Naive thymus-derived CD4-positive, alpha-beta T cell (primary cell): ENCODE measurements at regions of chr3 and their contacts with region 1.

Region 1: GRCh38 chr3:179015551-179016020 is 56.0 kb downstream of the ZMAT3 start:
- DNase-seq: peak in 8 of 9 donors; percentile 41 to 87 (median 82)
- ATAC-seq: peak; percentile 99
- H3K4me3 ChIP-seq: no peak overlapping the region
- H3K4me3 Mint-ChIP-seq: peak overlapping the region in 1 of 10 donors; percentile 35
- H3K27ac ChIP-seq: no peak overlapping the region
- H3K27ac Mint-ChIP-seq: peak overlapping the region in 5 of 9 donors; percentile 2 to 53 (median 32)
- H3K4me1 ChIP-seq: peaks cover 0 to 20% of the 10 kb centered on the region in 2 donors
- H3K4me1 Mint-ChIP-seq: peaks cover 15 to 42% (median 41%) of the 10 kb centered on the region in 7 donors
- H3K27me3 ChIP-seq: no peaks in the 10 kb centered on the region
- H3K27me3 Mint-ChIP-seq: peaks cover 0 to 19% (median 0%) of the 10 kb centered on the region in 5 donors

Region 2: DNA sequence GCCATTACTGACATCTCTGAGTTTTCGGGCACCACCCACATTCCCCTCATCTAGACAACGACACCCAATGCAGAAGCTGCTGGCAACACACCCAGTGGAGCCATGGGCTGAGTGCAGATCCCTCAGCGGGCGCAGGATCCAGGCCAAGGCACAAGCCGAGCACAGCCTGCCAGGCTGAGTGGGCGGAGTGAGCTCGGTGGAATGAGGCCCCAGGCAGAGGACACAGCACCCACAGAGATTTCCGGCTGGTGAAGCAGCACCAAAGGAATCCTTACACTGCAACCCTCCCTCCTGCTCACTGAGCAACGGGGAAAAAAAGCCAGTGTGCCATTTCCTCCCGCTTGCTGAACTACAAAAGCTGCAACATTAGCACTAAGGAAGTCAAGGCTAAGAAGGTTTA is 21.8 kb after region 1 on chr3:
- CTCF ChIA-PET with region 1: interaction called, 12 read pairs
- POLR2A ChIA-PET with region 1: interaction called, 22 read pairs
- intact Hi-C with region 1: loop called (anchors 2 kb)
- DNase-seq: peak in 8 of 9 donors; percentile 62 to 81 (median 76)
- ATAC-seq: peak; percentile 95
- H3K4me3 ChIP-seq: peak overlapping the region; percentile 44
- H3K4me3 Mint-ChIP-seq: peak overlapping the region in 4 of 10 donors; percentile 55 to 79 (median 70)
- H3K27ac ChIP-seq: peak overlapping the region; percentile 69
- H3K27ac Mint-ChIP-seq: peak overlapping the region in 1 of 9 donors; percentile 79
- H3K4me1 ChIP-seq: peaks cover 11 to 33% of the 10 kb centered on the region in 2 donors
- H3K4me1 Mint-ChIP-seq: peaks cover 9 to 19% (median 17%) of the 10 kb centered on the region in 7 donors
- H3K27me3 ChIP-seq: no peaks in the 10 kb centered on the region
- H3K27me3 Mint-ChIP-seq: no peaks in the 10 kb centered on the region

Region 3: DNA sequence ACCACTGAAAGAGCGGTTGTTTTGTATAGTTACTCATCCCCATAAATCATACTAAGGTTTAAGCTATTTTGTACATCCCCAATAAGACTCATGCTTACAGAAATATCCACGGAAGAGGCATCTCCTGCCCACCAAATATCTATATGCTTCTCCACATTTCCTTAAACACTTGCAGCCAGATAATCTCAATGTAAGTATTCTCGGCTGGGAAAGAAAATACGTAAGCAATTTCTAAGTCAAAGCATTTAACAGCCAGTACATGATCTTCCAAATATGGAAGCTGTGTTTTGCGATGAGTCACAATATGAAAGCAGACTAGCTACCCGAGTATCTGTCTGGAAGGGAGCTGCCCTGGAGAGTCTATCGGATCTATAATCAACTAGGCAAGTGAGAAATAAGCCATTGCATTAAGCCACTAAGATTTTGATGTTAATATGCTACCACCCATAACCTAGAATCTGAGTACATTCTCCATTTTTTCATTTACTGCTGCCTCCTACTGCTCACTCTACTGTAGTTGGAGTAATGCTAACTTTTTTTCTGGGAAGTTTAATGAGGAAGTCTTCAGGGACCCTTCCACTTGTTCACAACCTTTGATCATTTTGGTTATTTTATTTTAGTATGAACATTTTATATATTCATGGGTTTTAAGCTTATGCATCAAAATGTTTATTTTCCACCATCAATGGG is 82.9 kb after region 1 on chr3:
- CTCF ChIA-PET with region 1: interaction called, 5 read pairs
- POLR2A ChIA-PET with region 1: no interaction called
- intact Hi-C with region 1: loop called in 1 of 2 experiments (anchors 1 kb)
- DNase-seq: no peak
- ATAC-seq: no peak
- H3K4me3 ChIP-seq: no peak overlapping the region
- H3K4me3 Mint-ChIP-seq: no peak overlapping the region
- H3K27ac ChIP-seq: no peak overlapping the region
- H3K27ac Mint-ChIP-seq: peak overlapping the region in 1 of 9 donors; percentile 2
- H3K4me1 ChIP-seq: no peaks in the 10 kb centered on the region
- H3K4me1 Mint-ChIP-seq: peaks cover 0 to 4% (median 0%) of the 10 kb centered on the region in 7 donors
- H3K27me3 ChIP-seq: no peaks in the 10 kb centered on the region
- H3K27me3 Mint-ChIP-seq: peaks cover 0 to 20% (median 0%) of the 10 kb centered on the region in 5 donors

Region 4: GRCh38 chr3:179196098-179196497 is 180.5 kb after region 1 on chr3:
- CTCF ChIA-PET with region 1: no interaction called
- POLR2A ChIA-PET with region 1: no interaction called
- intact Hi-C with region 1: loop called in 1 of 2 experiments (anchors 1 kb)
- DNase-seq: peak in 7 of 9 donors; percentile 49 to 72 (median 53)
- ATAC-seq: peak; percentile 78
- H3K4me3 ChIP-seq: no peak overlapping the region
- H3K4me3 Mint-ChIP-seq: peak overlapping the region in 5 of 10 donors; percentile 21 to 79 (median 50)
- H3K27ac ChIP-seq: no peak overlapping the region
- H3K27ac Mint-ChIP-seq: peak overlapping the region in 8 of 9 donors; percentile 12 to 88 (median 53)
- H3K4me1 ChIP-seq: peaks cover 4 to 23% of the 10 kb centered on the region in 2 donors
- H3K4me1 Mint-ChIP-seq: peaks cover 22 to 67% (median 63%) of the 10 kb centered on the region in 7 donors
- H3K27me3 ChIP-seq: no peaks in the 10 kb centered on the region
- H3K27me3 Mint-ChIP-seq: no peaks in the 10 kb centered on the region

Region 5: DNA sequence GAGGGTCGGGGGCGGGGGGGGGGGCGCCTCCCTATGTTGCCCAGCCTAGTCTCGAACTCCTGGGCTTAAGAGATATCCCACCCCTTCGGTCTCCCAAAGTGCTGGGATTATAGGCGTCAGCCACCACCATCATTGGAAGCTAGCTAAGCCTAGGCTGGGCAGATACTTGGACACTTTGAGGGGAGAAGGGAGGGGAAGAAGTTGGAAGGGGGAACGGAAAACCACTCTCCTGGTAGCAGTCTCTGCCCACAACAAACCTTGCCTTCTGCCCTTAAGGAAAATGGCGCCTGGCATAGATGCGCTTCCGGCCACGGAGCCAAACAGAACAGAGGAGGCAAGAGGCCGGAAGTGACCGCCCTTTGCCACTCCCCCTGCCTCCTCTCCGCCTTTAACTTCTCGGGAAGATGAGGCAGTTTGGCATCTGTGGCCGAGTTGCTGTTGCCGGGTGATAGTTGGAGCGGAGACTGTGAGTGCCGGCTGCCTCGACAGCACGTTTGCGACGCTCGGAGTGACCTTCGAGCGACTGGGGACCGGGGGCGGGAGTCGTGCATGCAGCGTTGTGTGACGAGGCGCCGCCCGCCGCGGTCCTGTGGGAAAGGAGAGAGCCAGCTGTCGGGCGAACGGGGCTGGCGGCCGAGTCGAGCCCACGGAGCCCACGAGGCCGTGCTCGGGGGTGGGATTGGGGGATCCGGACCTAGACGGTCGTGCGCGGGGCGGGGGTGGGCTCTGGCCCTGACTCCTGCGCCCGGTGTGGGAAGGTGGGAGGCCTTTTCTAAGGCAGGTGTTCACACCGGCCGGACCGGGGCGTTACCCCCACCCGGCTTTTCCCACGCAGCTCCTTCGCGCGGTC is 332.0 kb after region 1 on chr3 and contains the start of gene MFN1:
- CTCF ChIA-PET with region 1: no interaction called
- POLR2A ChIA-PET with region 1: interaction called, 4 read pairs
- intact Hi-C with region 1: loop called (anchors 1 kb)
- DNase-seq: peak; percentile 69 to 91 (median 88)
- ATAC-seq: peak; percentile 99
- H3K4me3 ChIP-seq: peak within 1 kb of the TSS; percentile 99
- H3K4me3 Mint-ChIP-seq: peak within 1 kb of the TSS; percentile 97 to 100 (median 98)
- H3K27ac ChIP-seq: peak within 1 kb of the TSS; percentile 81
- H3K27ac Mint-ChIP-seq: peak within 1 kb of the TSS; percentile 84 to 98 (median 94)
- H3K4me1 ChIP-seq: peaks cover 8 to 13% of the 10 kb centered on the region in 2 donors
- H3K4me1 Mint-ChIP-seq: peaks cover 7 to 39% (median 28%) of the 10 kb centered on the region in 7 donors
- H3K27me3 ChIP-seq: no peaks in the 10 kb centered on the region
- H3K27me3 Mint-ChIP-seq: no peaks in the 10 kb centered on the region
- total RNA-seq, gene MFN1: 32.2 to 58.1 (median 40.3) TPM

Region 6: GRCh38 chr3:179653096-179653797 is 637.7 kb after region 1 on chr3:
- CTCF ChIA-PET with region 1: no interaction called
- POLR2A ChIA-PET with region 1: no interaction called
- intact Hi-C with region 1: loop called in 1 of 2 experiments (anchors 5 kb)
- DNase-seq: peak; percentile 46 to 74 (median 71)
- ATAC-seq: peak; percentile 71
- H3K4me3 ChIP-seq: peak overlapping the region; percentile 83
- H3K4me3 Mint-ChIP-seq: peak overlapping the region; percentile 87 to 98 (median 94)
- H3K27ac ChIP-seq: peak overlapping the region; percentile 74
- H3K27ac Mint-ChIP-seq: peak overlapping the region; percentile 84 to 90 (median 87)
- H3K4me1 ChIP-seq: peaks cover 0 to 7% of the 10 kb centered on the region in 2 donors
- H3K4me1 Mint-ChIP-seq: peaks cover 20 to 55% (median 41%) of the 10 kb centered on the region in 7 donors
- H3K27me3 ChIP-seq: no peaks in the 10 kb centered on the region
- H3K27me3 Mint-ChIP-seq: peaks cover 0 to 19% (median 0%) of the 10 kb centered on the region in 5 donors